Dendritic cell treated with granulocyte-macrophage colony-stimulating factor and Interleukin-4, amounts not matched to agents 40 ng/mL and 50 ng/mL, for 4 days (primary cell): ENCODE measurements at regions of chr7 and their contacts with region 1.

Region 1: DNA sequence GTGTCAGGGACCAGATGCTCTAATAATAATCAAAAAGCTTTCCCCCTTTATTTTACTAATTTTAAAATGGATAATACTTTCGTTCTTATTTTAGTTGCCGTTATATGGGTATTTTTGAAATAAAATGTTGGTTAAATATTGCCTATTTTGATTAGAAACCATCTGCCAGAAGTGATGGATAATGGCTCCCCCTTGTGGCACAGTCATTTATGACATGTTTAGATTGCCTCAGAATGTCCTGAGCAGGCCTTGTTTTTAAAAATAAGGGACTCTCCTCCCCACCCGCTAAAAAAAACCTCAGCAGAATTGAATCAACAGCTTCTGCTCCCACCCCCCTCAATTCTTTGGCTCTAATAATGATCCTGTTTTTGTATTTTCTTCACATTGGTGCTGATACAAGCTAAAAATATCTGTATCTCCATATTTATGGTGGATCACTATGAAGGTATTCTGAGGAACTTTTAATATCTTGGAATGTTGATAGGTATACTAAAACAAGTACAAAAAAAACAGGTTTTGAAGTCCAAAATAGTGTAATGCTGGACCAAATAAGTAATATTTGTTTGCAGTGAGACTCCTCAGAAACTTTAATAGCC is 38.8 kb downstream of the TMEM60 start:
- H3K4me3 Mint-ChIP-seq: no peak overlapping the region
- H3K27ac Mint-ChIP-seq: no peak overlapping the region
- H3K4me1 Mint-ChIP-seq: peaks cover 6% of the 10 kb centered on the region
- H3K27me3 Mint-ChIP-seq: no peaks in the 10 kb centered on the region

Region 2: DNA sequence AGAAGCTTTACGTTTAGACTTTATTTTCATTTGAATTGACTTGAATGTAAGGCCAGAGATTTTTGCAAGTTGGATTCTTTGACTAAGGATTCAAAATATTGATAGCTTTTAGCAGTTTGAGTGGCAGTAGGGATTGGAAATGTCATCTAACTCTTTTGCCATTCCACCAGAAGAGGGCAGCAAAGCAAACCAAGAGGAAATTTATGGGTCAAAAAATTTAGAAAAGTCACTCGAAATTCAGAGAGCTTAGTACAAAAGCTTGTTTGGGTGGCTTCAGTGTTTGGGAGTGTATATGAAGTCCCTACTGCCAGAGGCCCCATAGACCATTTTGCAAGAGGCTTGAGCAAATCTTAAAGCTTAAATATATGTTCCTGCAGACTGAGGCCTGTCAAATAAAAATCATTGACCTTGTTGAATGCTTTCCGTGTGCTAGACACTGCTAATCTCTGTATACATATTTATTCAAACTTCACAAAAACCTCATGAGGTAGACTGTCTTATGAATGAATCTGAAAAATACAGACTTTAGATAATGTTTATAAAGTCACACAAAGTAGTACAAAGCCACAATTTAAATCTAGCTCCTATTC is 107.7 kb before region 1 on chr7:
- intact Hi-C with region 1: loop called (anchors 1 kb)
- H3K4me3 Mint-ChIP-seq: no peak overlapping the region
- H3K27ac Mint-ChIP-seq: no peak overlapping the region
- H3K4me1 Mint-ChIP-seq: no peaks in the 10 kb centered on the region
- H3K27me3 Mint-ChIP-seq: no peaks in the 10 kb centered on the region

Region 3: GRCh38 chr7:77696198-77697028 is 63.0 kb before region 1 on chr7 and contains the start of gene RSBN1L:
- intact Hi-C with region 1: loop called (anchors 5 kb)
- H3K4me3 Mint-ChIP-seq: peak within 1 kb of the TSS; percentile 100
- H3K27ac Mint-ChIP-seq: peak within 1 kb of the TSS; percentile 100
- H3K4me1 Mint-ChIP-seq: peaks cover 35% of the 10 kb centered on the region
- H3K27me3 Mint-ChIP-seq: no peaks in the 10 kb centered on the region

Region 4: DNA sequence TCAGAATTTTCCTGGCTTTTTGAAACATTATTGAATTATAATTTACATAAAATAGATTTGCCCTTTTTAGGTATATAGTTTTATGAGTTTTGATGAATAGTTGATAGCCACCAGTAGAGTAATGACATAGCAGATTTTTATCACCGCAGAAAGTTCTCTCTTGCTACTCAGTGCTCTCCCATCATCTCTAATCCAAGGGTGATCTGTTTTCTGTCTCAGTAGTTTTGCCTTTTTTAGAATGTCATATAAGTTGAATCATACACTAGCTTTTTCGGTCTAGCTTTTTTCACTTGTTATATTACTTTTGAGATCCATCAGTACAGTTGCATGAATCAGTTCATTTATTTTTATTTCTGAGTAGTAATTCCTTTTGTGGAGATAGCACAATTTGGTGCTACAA is 45.2 kb before region 1 on chr7:
- intact Hi-C with region 1: no loop called
- H3K4me3 Mint-ChIP-seq: no peak overlapping the region
- H3K27ac Mint-ChIP-seq: no peak overlapping the region
- H3K4me1 Mint-ChIP-seq: peaks cover 22% of the 10 kb centered on the region
- H3K27me3 Mint-ChIP-seq: no peaks in the 10 kb centered on the region